Activated naive CD4-positive, alpha-beta T cell treated with anti-CD3 and anti-CD28 coated beads for 36 hours (primary cell): ENCODE measurements at regions of chr10 and their contacts with region 1.

Region 1: GRCh38 chr10:43160046-43160918 is 22.0 kb downstream of the CSGALNACT2 start:
- DNase-seq: peak; percentile 57
- H3K4me3 Mint-ChIP-seq: no peak overlapping the region
- H3K27ac Mint-ChIP-seq: peak overlapping the region; percentile 79
- H3K4me1 Mint-ChIP-seq: peaks cover 49% of the 10 kb centered on the region
- H3K27me3 Mint-ChIP-seq: no peaks in the 10 kb centered on the region

Region 2: DNA sequence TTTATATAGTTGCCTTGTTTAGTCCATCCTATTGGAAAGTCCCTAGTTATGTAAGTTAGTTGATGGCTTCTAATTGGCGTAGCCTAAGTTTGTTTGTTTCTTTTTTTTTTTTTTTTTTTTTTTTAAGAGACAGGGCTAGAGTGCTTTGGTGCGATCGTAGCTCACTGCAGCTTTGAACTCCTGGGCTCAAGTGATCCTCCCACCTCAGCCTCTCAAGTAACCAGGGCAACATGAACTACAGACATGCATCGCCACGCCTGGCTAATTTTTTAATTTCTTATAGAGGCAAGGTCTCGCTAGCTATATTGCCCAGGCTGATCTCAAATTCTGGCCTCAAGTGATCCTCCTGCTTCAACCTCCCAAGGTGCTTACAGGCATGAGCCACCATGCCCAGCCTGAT is 15.0 kb before region 1 on chr10:
- CTCF ChIA-PET with region 1: interaction called, 4 read pairs
- intact Hi-C with region 1: loop called (anchors 1 kb)
- DNase-seq: no peak
- H3K4me3 Mint-ChIP-seq: no peak overlapping the region
- H3K27ac Mint-ChIP-seq: no peak overlapping the region
- H3K4me1 Mint-ChIP-seq: peaks cover 71% of the 10 kb centered on the region
- H3K27me3 Mint-ChIP-seq: no peaks in the 10 kb centered on the region